ENCODE measurements at regions of chr9 and their contacts with region 1.

Region 1: DNA sequence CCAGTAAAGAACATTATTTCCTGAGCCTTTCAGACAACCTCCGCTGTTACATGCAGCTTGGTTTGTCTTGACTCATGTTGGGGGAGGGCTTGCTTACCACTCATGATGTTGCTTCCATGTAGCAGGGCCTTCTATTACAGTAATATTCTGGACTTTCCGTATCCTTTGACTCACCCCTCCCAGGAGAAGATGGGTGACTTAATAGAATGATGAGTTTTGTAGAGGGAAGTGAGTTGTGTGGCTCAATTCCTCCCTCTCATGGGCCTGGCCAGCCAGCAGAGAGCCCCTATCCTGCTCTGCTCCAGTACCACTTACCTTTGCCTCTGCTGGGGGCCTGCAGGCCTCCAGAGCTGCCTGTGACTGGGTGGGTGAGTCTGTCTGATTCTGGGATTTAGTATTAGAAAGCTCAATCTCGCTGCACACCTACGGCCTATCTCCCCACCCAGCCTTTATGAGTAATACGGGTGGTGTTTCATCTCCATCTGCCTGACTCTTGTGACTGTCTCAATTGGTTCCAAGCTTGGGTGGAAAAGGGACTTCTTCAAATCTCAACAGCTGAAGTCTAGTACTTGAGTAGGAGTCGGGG is 52.6 kb upstream of the KLF9 start:
- DNase-seq: no peak
- H3K4me3 Mint-ChIP-seq: peak overlapping the region; percentile 14
- H3K27ac Mint-ChIP-seq: peak overlapping the region; percentile 77
- H3K4me1 Mint-ChIP-seq: peaks cover 39% of the 10 kb centered on the region
- H3K27me3 Mint-ChIP-seq: no peaks in the 10 kb centered on the region

Region 2: GRCh38 chr9:70398145-70398556 is 68.9 kb before region 1 on chr9:
- intact Hi-C with region 1: no loop called
- DNase-seq: peak; percentile 75
- H3K4me3 Mint-ChIP-seq: peak overlapping the region; percentile 58
- H3K27ac Mint-ChIP-seq: peak overlapping the region; percentile 52
- H3K4me1 Mint-ChIP-seq: peaks cover 38% of the 10 kb centered on the region
- H3K27me3 Mint-ChIP-seq: no peaks in the 10 kb centered on the region

Region 3: DNA sequence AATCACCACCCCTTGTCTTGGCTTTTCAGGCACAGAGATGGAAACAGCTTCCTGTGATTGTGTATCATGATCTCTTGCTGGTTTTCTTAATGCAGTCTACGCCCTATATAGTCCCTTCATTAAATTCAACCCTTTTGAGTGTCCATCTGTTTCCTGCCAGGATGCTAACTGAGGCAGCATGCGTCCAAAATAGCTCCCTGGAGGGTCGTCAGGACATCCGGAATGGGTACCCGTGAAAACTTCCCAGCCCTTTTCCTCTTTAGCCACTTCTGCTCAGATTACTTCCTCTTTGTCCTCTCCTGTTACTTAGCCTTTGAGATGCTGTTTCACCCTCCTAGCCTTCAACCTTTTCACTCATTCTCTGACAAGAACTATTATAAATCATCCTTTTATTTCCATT is 27.2 kb after region 1 on chr9:
- intact Hi-C with region 1: no loop called
- DNase-seq: no peak
- H3K4me3 Mint-ChIP-seq: no peak overlapping the region
- H3K27ac Mint-ChIP-seq: no peak overlapping the region
- H3K4me1 Mint-ChIP-seq: peaks cover 30% of the 10 kb centered on the region
- H3K27me3 Mint-ChIP-seq: no peaks in the 10 kb centered on the region

Region 4: GRCh38 chr9:70504834-70505233 is 37.8 kb after region 1 on chr9:
- intact Hi-C with region 1: no loop called
- DNase-seq: no peak
- H3K4me3 Mint-ChIP-seq: no peak overlapping the region
- H3K27ac Mint-ChIP-seq: no peak overlapping the region
- H3K4me1 Mint-ChIP-seq: peaks cover 3% of the 10 kb centered on the region
- H3K27me3 Mint-ChIP-seq: no peaks in the 10 kb centered on the region

Region 5: DNA sequence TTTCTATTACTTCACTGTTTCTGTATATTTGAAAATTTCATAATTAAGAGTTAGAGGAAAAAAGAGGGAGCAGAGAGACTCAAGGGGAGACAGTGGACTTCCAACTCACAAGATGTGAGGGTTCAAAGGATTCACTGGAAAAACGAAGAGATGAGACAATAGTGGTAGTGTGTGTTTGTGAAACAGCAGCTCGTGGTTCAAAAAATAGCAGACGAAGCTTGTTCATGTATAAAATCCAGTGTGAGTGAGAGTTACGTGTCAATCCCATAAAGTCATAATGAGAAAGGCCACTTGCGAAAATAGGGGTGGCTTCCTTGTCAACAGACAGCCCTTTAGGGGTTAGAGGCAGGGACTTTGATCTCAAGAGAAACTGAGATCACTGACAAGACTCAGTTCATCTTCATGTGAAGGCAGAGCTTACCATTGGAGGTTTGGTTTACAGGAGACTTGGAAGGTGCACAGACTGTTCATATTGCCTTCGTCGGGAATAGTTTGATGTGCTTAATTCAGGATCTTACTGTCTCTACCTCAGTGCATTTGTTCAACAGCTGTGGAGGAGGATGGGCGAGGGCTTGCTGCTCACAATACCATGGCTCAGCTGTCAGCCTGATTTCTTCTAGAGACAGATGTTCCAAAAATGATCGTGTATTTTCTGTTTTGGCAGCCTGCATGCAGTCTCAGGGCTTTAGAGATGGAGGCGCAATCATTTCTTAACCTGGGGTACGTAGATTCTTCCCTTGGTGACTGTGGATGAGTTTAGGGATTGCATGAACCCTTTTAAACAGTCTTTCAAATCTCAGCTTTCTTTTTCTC is 53.0 kb after region 1 on chr9:
- intact Hi-C with region 1: loop called (anchors 2 kb)
- DNase-seq: peak; percentile 67
- H3K4me3 Mint-ChIP-seq: peak overlapping the region; percentile 69
- H3K27ac Mint-ChIP-seq: peak overlapping the region; percentile 85
- H3K4me1 Mint-ChIP-seq: peaks cover 28% of the 10 kb centered on the region
- H3K27me3 Mint-ChIP-seq: no peaks in the 10 kb centered on the region

Measured in activated CD4-positive, alpha-beta T cell treated with anti-CD3 and anti-CD28 coated beads, Interleukin-2, amount 10 ng/mL, durations not matched to agents 24 days and 14 days (primary cell).